WTC11 (cell line): ENCODE measurements at regions of chr17 and their contacts with region 1.

Region 1: DNA sequence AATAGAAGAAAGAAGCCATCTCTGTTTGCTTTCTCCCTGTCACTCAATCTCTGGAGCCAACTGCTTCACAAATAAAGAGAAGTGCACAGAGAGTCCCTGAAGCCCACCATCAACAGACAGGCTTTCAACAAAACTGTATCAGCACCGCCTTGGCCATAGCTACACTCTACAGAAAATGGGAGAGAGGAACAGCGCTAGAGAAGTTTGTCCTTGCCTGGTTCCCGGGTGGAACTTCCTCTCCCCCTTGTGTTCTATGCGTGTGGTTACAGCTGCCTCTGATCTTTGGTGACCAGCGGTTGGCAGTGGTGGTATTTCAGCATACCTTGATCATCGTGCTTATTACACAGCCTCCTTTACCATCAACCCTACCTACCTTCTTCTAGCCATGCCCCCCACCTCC is 91.4 kb upstream of the CCL2 start:
- DNase-seq: peak; percentile 44
- ATAC-seq: peak; percentile 92
- H3K4me3 Mint-ChIP-seq: no peak overlapping the region
- H3K27ac Mint-ChIP-seq: peak overlapping the region; percentile 35; the same call in 1 of the 2 replicates
- H3K4me1 Mint-ChIP-seq: peaks cover 54% of the 10 kb centered on the region
- H3K27me3 Mint-ChIP-seq: no peaks in the 10 kb centered on the region; the same call in 1 of the 2 replicates
- CTCF ChIP-seq: peak; percentile 39; the same call in 1 of the 2 replicates

Region 2: DNA sequence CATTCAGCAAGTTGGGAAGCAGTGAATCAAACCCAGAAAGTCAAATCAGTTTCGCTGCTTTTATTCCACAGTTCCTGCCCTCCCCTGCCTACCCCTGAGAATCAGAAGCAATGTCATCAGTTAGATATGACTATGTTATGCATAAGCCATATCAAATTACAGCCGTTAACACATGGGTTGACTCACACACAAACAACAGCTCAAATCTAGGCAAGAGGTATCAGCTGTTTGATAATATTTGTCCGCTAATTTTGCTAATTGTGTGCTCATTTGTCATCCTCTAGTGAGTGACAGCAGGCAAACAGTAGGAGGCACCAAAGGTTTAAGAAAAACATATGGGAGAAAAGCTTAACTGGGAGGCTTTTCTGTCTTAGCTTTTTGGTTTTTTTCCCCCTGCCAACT is 235.9 kb before region 1 on chr17:
- CTCF ChIA-PET with region 1: interaction called, 19 read pairs
- POLR2A ChIA-PET with region 1: no interaction called
- DNase-seq: no peak
- ATAC-seq: no peak
- H3K4me3 Mint-ChIP-seq: no peak overlapping the region
- H3K27ac Mint-ChIP-seq: no peak overlapping the region
- H3K4me1 Mint-ChIP-seq: peaks cover 53% of the 10 kb centered on the region
- H3K27me3 Mint-ChIP-seq: no peaks in the 10 kb centered on the region
- CTCF ChIP-seq: no peak

Region 3: GRCh38 chr17:33964344-33964979 is 199.2 kb before region 1 on chr17:
- CTCF ChIA-PET with region 1: interaction called, 16 read pairs
- POLR2A ChIA-PET with region 1: no interaction called
- DNase-seq: no peak
- ATAC-seq: peak; percentile 80
- H3K4me3 Mint-ChIP-seq: no peak overlapping the region
- H3K27ac Mint-ChIP-seq: no peak overlapping the region
- H3K4me1 Mint-ChIP-seq: peaks cover 21% of the 10 kb centered on the region
- H3K27me3 Mint-ChIP-seq: no peaks in the 10 kb centered on the region
- CTCF ChIP-seq: 0 out of 2 replicates have a peak, but pooled peaks have one; percentile 20

Region 4: DNA sequence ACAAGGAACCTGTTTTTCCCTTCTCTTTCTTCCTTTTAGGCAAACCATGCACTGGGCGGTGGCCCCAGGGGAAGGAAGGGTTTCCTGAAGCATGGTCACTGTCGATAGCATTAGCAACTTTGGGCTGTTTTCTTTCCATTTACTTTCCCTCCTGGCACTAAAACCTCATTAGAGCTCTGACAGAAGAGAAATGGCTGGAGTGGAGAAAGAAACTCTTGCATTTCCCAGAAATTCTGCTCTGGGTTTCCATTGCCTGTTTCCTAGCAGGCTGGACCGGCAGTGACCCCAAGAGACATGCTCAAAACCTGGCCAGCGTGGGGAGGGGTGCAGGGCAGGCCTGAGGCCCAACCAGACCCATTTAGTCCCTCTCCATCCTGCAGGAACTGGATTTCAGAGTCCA is 139.3 kb before region 1 on chr17:
- CTCF ChIA-PET with region 1: no interaction called
- POLR2A ChIA-PET with region 1: no interaction called
- DNase-seq: no peak
- ATAC-seq: no peak
- H3K4me3 Mint-ChIP-seq: no peak overlapping the region
- H3K27ac Mint-ChIP-seq: no peak overlapping the region
- H3K4me1 Mint-ChIP-seq: no peaks in the 10 kb centered on the region; the same call in 1 of the 2 replicates
- H3K27me3 Mint-ChIP-seq: no peaks in the 10 kb centered on the region; the same call in 1 of the 2 replicates
- CTCF ChIP-seq: no peak

Region 5: GRCh38 chr17:34081269-34081668 is 82.4 kb before region 1 on chr17:
- CTCF ChIA-PET with region 1: interaction called, 34 read pairs
- POLR2A ChIA-PET with region 1: no interaction called
- DNase-seq: peak; percentile 54
- ATAC-seq: peak; percentile 87
- H3K4me3 Mint-ChIP-seq: no peak overlapping the region
- H3K27ac Mint-ChIP-seq: no peak overlapping the region
- H3K4me1 Mint-ChIP-seq: peaks cover 23% of the 10 kb centered on the region
- H3K27me3 Mint-ChIP-seq: no peaks in the 10 kb centered on the region
- CTCF ChIP-seq: 0 out of 2 replicates have a peak, but pooled peaks have one; percentile 42